Activated B cell treated with CpG ODN at 0.5 μM for 24 hours (primary cell): ENCODE measurements at regions of chr6 and their contacts with region 1.

Region 1: DNA sequence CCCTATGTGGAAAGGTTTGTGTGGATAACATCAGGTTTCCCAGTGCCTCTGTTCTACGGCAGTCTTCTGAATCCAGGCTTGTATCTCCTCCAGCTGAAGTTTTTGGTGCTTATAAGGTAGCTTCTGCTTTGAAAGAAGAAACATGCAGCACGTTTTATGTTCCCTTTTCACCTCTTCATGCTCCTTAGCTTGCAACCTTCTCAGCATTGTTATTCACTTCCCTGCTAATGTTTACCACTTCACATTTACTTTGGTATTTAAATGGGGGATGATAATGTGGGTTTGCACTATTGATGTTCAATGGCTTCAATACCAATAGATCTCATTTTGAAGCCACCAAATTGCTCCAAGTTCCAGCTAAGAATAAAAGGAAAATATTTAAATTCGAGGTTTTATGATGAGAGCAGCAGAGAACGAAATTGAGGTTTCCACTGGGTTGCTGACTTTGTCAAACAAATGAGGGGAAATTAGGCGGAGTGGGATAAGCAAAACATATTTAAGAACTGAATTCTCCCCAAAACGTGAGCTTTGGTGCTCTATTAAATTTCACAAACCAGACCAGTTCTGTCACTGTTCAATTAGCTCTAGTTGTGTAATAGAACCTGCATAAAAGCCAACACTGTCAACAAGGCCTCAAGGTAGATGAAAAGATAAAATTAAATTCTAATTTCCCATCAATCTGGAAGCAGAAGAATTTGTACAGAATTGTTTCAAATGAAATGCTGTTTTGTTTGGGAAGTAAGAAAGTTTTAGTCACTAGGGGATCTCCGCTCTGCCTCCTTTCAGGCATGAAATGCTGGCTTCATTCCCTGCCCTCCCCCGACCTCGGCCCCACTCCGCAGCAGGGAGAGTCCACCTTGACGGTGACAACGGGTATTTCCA is 1.4 kb downstream of the IL22RA2 start:
- DNase-seq: no peak
- ATAC-seq: peak; percentile 68
- H3K4me3 Mint-ChIP-seq: peak overlapping the region; percentile 63
- H3K27ac Mint-ChIP-seq: peak overlapping the region; percentile 95
- H3K4me1 Mint-ChIP-seq: peaks cover 90% of the 10 kb centered on the region
- H3K27me3 Mint-ChIP-seq: no peaks in the 10 kb centered on the region
- CTCF ChIP-seq: no peak

Region 2: DNA sequence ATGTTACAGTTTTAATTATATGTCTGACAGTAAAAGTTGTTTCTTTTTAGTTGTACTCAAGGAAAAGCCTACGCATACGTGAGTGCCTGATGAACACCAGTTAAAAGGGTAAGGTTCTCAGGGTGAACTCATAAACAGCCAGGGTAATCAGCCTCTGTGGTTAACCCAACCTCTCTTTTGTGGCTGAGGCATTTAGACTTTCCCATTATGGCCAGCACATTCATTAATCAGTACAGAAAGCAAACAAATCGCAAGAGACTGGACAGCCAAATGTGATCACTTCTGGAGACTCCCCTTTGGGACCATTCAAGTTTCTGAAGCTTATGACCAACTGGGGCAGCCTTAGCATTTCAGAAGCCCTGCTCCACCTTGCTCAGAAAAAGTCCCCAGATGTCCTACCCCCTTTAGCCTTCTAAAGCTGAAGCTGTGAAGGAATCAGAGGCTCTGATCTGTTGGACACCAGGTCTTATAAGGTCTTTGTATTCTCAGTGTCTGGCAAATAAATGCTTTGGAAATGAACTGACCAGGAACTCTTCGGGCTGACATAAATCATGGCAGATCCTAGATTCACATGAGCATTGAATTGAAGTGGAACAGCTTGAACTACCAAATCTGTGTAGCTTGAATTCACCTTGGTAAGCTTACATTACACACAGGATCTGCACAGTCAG is 146.1 kb before region 1 on chr6:
- CTCF ChIA-PET with region 1: no interaction called
- POLR2A ChIA-PET with region 1: no interaction called
- intact Hi-C with region 1: no loop called
- DNase-seq: no peak
- ATAC-seq: no peak
- H3K4me3 Mint-ChIP-seq: no peak overlapping the region
- H3K27ac Mint-ChIP-seq: no peak overlapping the region
- H3K4me1 Mint-ChIP-seq: no peaks in the 10 kb centered on the region
- H3K27me3 Mint-ChIP-seq: peaks cover 30% of the 10 kb centered on the region
- CTCF ChIP-seq: no peak

Region 3: DNA sequence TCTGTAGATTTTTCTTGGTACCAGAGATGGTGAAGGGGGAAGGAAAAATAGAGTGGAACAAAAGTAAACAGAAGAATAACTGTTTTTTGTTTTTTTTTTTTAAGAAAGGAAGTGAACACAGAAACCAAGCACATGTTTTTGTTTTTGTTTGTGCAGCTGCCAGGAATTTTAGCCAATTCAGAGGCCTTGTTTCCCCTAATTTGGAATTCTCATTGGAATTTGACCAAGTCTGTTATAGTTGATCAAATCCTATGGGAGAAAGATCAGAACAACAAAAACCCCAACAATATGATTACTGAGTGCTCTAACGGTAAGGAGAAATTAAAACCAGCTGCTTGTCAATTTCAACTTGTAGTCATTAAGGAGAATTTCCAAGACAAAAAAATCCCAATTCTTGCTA is 19.6 kb after region 1 on chr6:
- CTCF ChIA-PET with region 1: interaction called, 3 read pairs
- POLR2A ChIA-PET with region 1: no interaction called
- intact Hi-C with region 1: loop called (anchors 2 kb)
- DNase-seq: no peak
- ATAC-seq: no peak
- H3K4me3 Mint-ChIP-seq: no peak overlapping the region
- H3K27ac Mint-ChIP-seq: no peak overlapping the region
- H3K4me1 Mint-ChIP-seq: peaks cover 10% of the 10 kb centered on the region
- H3K27me3 Mint-ChIP-seq: no peaks in the 10 kb centered on the region
- CTCF ChIP-seq: no peak

Region 4: DNA sequence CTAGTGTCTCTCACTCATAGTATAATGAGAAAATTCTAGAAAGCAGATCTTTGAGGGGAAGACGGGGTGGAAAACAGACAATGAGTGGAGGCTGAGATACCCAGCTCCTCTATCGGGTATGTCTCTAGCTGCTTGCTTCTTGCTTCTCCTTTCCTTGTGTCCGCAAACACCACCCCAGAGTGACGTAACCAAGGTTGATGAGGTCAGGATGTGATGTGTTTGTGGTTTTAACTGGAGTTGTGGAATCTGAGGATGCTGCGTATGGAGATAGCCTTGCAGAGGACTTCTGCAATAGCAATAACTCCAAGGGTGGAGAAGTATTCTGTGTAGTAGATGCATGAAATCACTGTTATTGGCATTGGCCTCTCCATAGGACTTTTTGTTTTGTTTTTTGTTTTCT is 179.8 kb after region 1 on chr6:
- CTCF ChIA-PET with region 1: no interaction called
- POLR2A ChIA-PET with region 1: no interaction called
- intact Hi-C with region 1: no loop called
- DNase-seq: no peak
- ATAC-seq: no peak
- H3K4me3 Mint-ChIP-seq: no peak overlapping the region
- H3K27ac Mint-ChIP-seq: no peak overlapping the region
- H3K4me1 Mint-ChIP-seq: peaks cover 27% of the 10 kb centered on the region
- H3K27me3 Mint-ChIP-seq: no peaks in the 10 kb centered on the region
- CTCF ChIP-seq: no peak